ENCODE measurements at regions of chr16 and their contacts with region 1.

Region 1: GRCh38 chr16:4330277-4330874 is 14.5 kb downstream of the GLIS2 start:
- DNase-seq: peak; percentile 74
- ATAC-seq: peak; percentile 72
- H3K4me3 ChIP-seq: no peak overlapping the region
- H3K4me3 Mint-ChIP-seq: no peak overlapping the region
- H3K27ac ChIP-seq: no peak overlapping the region
- H3K27ac Mint-ChIP-seq: no peak overlapping the region
- H3K4me1 ChIP-seq: peaks cover 14 to 18% of the 10 kb centered on the region in 2 donors
- H3K4me1 Mint-ChIP-seq: peaks cover 6% of the 10 kb centered on the region
- H3K27me3 ChIP-seq: peaks cover 0 to 24% (median 0%) of the 10 kb centered on the region in 4 experiments
- H3K27me3 Mint-ChIP-seq: peaks cover 3% of the 10 kb centered on the region
- CTCF ChIP-seq: peak; percentile 98

Region 2: GRCh38 chr16:3690470-3690928 is 639.9 kb before region 1 on chr16:
- CTCF ChIA-PET with region 1: no interaction called
- POLR2A ChIA-PET with region 1: no interaction called
- intact Hi-C with region 1: loop called (anchors 2 kb)
- DNase-seq: peak; percentile 86
- ATAC-seq: peak; percentile 98
- H3K4me3 ChIP-seq: no peak overlapping the region
- H3K4me3 Mint-ChIP-seq: no peak overlapping the region
- H3K27ac ChIP-seq: no peak overlapping the region
- H3K27ac Mint-ChIP-seq: peak overlapping the region; percentile 50
- H3K4me1 ChIP-seq: peaks cover 3 to 9% of the 10 kb centered on the region in 2 donors
- H3K4me1 Mint-ChIP-seq: peaks cover 7% of the 10 kb centered on the region
- H3K27me3 ChIP-seq: no peaks in the 10 kb centered on the region
- H3K27me3 Mint-ChIP-seq: no peaks in the 10 kb centered on the region
- CTCF ChIP-seq: peak; percentile 96

Region 3: GRCh38 chr16:3938848-3939624 is 391.3 kb before region 1 on chr16:
- CTCF ChIA-PET with region 1: interaction called, 3 read pairs
- POLR2A ChIA-PET with region 1: no interaction called
- intact Hi-C with region 1: loop called (anchors 2 kb)
- DNase-seq: peak; percentile 77
- ATAC-seq: peak; percentile 80
- H3K4me3 ChIP-seq: peak overlapping the region in 4 of 5 experiments; percentile 12 to 33 (median 20)
- H3K4me3 Mint-ChIP-seq: no peak overlapping the region
- H3K27ac ChIP-seq: no peak overlapping the region
- H3K27ac Mint-ChIP-seq: no peak overlapping the region
- H3K4me1 ChIP-seq: peaks cover 8 to 9% of the 10 kb centered on the region in 2 donors
- H3K4me1 Mint-ChIP-seq: no peaks in the 10 kb centered on the region
- H3K27me3 ChIP-seq: peaks cover 0 to 13% (median 3%) of the 10 kb centered on the region in 4 experiments
- H3K27me3 Mint-ChIP-seq: no peaks in the 10 kb centered on the region
- CTCF ChIP-seq: peak; percentile 97

Region 4: DNA sequence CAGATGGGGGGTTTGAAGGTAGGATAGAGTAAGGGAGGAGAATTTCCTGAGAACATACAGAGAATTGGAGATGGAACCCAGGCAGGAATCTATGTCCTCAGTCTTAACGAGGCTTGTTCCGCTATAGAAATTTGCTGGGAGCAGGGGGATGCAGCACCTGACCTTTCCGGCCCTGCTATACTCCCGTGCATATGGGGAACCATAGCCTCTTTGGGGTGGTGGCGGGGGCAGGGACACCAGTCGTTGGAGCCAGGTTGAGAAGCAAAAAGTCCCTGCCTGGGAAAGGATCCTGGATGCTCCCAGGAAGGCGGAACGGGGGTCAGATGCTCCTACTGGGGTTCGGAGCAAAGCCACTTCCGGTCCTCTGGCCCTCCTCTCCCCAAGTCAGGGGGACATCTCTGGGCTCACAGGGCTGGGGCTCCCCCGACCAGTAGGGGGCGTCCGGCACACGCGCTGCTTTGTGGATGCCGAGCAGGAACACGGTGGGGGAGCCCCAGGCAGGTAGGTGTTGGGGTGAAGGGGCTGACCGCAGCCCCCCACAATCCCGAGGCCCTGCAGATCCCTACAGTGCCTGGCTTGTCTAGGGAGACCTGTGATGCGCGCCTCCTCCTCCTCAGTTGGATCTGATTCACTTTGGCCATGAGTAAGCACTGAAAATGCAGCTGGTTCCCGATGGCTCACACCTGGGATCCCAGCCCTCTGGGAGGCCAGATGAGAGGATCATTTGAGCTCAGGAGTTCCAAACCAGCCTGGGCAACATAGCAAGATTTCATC is 42.0 kb before region 1 on chr16:
- CTCF ChIA-PET with region 1: interaction called, 152 read pairs
- POLR2A ChIA-PET with region 1: no interaction called
- intact Hi-C with region 1: no loop called
- DNase-seq: peak; percentile 87
- ATAC-seq: peak; percentile 98
- H3K4me3 ChIP-seq: no peak overlapping the region
- H3K4me3 Mint-ChIP-seq: no peak overlapping the region
- H3K27ac ChIP-seq: no peak overlapping the region
- H3K27ac Mint-ChIP-seq: no peak overlapping the region
- H3K4me1 ChIP-seq: peaks cover 7 to 8% of the 10 kb centered on the region in 2 donors
- H3K4me1 Mint-ChIP-seq: peaks cover 6% of the 10 kb centered on the region
- H3K27me3 ChIP-seq: peaks cover 0 to 3% (median 0%) of the 10 kb centered on the region in 4 experiments
- H3K27me3 Mint-ChIP-seq: peaks cover 20% of the 10 kb centered on the region
- CTCF ChIP-seq: peak; percentile 97

Region 5: DNA sequence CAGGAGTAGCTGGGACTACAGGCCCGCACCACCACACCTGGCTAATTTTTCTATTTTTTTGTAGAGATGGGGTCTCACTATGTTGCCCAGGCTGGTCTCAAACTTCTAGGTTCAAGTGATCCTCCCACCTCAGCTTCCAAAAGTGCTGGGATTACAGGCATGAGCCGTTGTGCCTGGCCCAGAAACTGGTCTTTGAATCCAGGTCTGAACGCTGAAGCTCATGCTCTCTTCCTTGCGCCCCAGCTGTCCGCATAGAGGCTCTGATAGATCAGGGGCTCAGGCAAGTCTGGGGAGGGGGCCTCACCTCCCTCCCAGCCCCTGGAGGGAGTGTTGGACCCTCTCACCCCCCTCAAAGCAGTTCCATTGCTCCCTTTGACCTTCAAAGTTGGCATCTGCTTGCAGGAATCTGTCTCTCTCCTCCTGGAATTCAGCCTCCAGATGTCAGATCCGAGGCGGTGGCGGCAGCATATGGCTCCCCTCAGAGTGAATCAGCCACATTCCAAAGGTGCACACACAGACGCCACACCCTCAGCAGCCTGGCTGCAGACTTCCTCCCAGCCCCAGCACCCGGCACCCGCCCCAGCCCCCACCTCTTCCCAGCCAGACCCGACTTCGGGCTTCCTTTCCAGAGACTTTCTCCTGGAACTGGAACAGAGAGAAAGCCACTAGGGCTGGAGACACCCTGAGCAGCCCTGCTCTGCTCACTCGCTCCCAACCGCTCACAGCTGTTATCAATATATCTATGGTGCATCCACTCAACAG is 31.4 kb before region 1 on chr16:
- CTCF ChIA-PET with region 1: interaction called, 165 read pairs
- POLR2A ChIA-PET with region 1: no interaction called
- intact Hi-C with region 1: no loop called
- DNase-seq: no peak
- ATAC-seq: no peak
- H3K4me3 ChIP-seq: no peak overlapping the region
- H3K4me3 Mint-ChIP-seq: no peak overlapping the region
- H3K27ac ChIP-seq: no peak overlapping the region
- H3K27ac Mint-ChIP-seq: no peak overlapping the region
- H3K4me1 ChIP-seq: no peaks in the 10 kb centered on the region
- H3K4me1 Mint-ChIP-seq: no peaks in the 10 kb centered on the region
- H3K27me3 ChIP-seq: no peaks in the 10 kb centered on the region
- H3K27me3 Mint-ChIP-seq: no peaks in the 10 kb centered on the region
- CTCF ChIP-seq: no peak